ENCODE measurements at regions of chr20 and their contacts with region 1.

Region 1: GRCh38 chr20:16573001-16573965 is at the start of gene KIF16B:
- DNase-seq: peak; percentile 97
- H3K4me3 ChIP-seq: peak within 1 kb of the TSS; percentile 87 to 95 (median 91)
- H3K27ac ChIP-seq: peak within 1 kb of the TSS; percentile 79 to 83 (median 81)
- H3K4me1 ChIP-seq: peaks cover 7 to 42% (median 39%) of the 10 kb centered on the region in 4 donors
- H3K27me3 ChIP-seq: no peaks in the 10 kb centered on the region
- CTCF ChIP-seq: peak in 1 of 3 experiments; percentile 22
- EP300 ChIP-seq: no peak
- POLR2A ChIP-seq: peak; percentile 48
- total RNA-seq, gene KIF16B: 15.4 to 21.1 (median 19.3) TPM

Region 2: GRCh38 chr20:16337707-16338106 is 235.6 kb before region 1 on chr20:
- intact Hi-C with region 1: no loop called
- DNase-seq: no peak
- H3K4me3 ChIP-seq: no peak overlapping the region
- H3K27ac ChIP-seq: no peak overlapping the region
- H3K4me1 ChIP-seq: no peaks in the 10 kb centered on the region
- H3K27me3 ChIP-seq: no peaks in the 10 kb centered on the region
- CTCF ChIP-seq: no peak
- EP300 ChIP-seq: no peak
- POLR2A ChIP-seq: no peak

Region 3: GRCh38 chr20:16729565-16730456 is 156.5 kb after region 1 on chr20 and contains the start of gene SNRPB2:
- intact Hi-C with region 1: loop called (anchors 5 kb)
- DNase-seq: peak; percentile 96
- H3K4me3 ChIP-seq: peak within 1 kb of the TSS; percentile 76 to 87 (median 83)
- H3K27ac ChIP-seq: peak within 1 kb of the TSS; percentile 74 to 87 (median 82)
- H3K4me1 ChIP-seq: peaks cover 17 to 41% (median 20%) of the 10 kb centered on the region in 4 donors
- H3K27me3 ChIP-seq: peaks cover 0 to 21% (median 0%) of the 10 kb centered on the region in 4 donors
- CTCF ChIP-seq: peak in 1 of 3 experiments; percentile 27
- EP300 ChIP-seq: no peak
- POLR2A ChIP-seq: no peak
- total RNA-seq, gene SNRPB2: 22.0 to 49.4 (median 30.5) TPM

Measured in esophagus muscularis mucosa (tissue), 4 donors.